Transverse colon (tissue), 4 donors: ENCODE measurements at regions of chr4 and their contacts with region 1.

Region 1: DNA sequence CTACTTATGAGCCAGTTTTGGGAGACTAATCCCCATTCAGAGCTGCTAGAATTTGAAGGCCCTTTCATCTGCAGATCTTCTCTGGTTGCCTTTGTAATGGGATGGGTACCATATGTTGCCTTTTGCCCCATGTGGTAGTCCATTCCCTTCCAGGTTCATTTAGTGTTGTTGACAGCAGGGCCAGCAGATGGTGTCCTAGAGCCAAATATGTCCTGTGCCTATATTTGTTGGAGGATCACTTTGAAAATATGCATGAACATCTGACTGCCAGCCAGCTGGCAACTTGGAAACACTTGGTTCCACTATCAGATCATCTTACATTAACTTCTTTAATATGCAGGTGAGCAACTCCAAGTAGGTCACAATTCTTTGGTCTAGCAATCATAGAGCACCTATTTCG is 30.4 kb downstream of the CFAP299 start:
- DNase-seq: peak; percentile 60
- H3K4me3 ChIP-seq: no peak overlapping the region
- H3K27ac ChIP-seq: no peak overlapping the region
- H3K4me1 ChIP-seq: peaks cover 0 to 4% (median 1%) of the 10 kb centered on the region in 4 donors
- H3K27me3 ChIP-seq: no peaks in the 10 kb centered on the region
- CTCF ChIP-seq: peak; percentile 49 to 72 (median 56)
- EP300 ChIP-seq: no peak
- POLR2A ChIP-seq: no peak

Region 2: GRCh38 chr4:79317711-79318110 is 1048.2 kb before region 1 on chr4:
- in situ Hi-C with region 1: no loop called
- intact Hi-C with region 1: no loop called
- DNase-seq: no peak
- H3K4me3 ChIP-seq: no peak overlapping the region
- H3K27ac ChIP-seq: no peak overlapping the region
- H3K4me1 ChIP-seq: no peaks in the 10 kb centered on the region
- H3K27me3 ChIP-seq: no peaks in the 10 kb centered on the region
- CTCF ChIP-seq: no peak
- EP300 ChIP-seq: no peak
- POLR2A ChIP-seq: no peak

Region 3: DNA sequence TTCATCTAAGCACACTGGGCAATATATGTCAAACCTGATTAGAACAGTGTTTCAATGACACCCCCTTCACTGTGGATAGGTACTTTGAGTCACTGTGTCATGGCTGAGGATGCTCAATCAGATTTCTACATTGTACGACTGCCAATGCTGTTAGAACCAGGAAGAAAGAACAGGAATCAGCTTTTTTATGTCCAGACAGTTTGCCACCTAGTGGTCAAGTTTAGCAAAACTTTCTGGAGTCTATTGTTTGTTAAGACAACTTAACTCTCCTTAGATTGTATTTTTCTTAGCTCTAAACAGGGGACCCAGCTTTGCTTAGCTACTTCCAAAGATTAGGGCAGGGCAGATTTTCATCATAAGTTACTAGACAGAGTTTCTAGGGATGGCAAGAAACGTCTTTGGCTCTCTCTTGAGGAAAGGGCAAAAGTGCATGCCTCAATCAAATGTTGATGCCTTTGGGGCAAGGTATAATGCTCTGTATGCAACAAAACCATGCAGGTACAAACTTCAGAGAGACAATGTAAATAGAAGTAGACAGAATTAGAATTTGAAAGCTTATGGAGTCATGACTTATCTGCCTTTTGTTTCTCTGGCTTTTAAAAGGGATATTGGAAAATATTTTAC is 624.1 kb after region 1 on chr4:
- in situ Hi-C with region 1: loop called in 2 of 4 experiments (anchors 5 to 10 kb)
- intact Hi-C with region 1: loop called (anchors 10 kb)
- DNase-seq: no peak
- H3K4me3 ChIP-seq: no peak overlapping the region
- H3K27ac ChIP-seq: no peak overlapping the region
- H3K4me1 ChIP-seq: no peaks in the 10 kb centered on the region
- H3K27me3 ChIP-seq: no peaks in the 10 kb centered on the region
- CTCF ChIP-seq: peak; percentile 64 to 74 (median 70)
- EP300 ChIP-seq: no peak
- POLR2A ChIP-seq: no peak

Region 4: DNA sequence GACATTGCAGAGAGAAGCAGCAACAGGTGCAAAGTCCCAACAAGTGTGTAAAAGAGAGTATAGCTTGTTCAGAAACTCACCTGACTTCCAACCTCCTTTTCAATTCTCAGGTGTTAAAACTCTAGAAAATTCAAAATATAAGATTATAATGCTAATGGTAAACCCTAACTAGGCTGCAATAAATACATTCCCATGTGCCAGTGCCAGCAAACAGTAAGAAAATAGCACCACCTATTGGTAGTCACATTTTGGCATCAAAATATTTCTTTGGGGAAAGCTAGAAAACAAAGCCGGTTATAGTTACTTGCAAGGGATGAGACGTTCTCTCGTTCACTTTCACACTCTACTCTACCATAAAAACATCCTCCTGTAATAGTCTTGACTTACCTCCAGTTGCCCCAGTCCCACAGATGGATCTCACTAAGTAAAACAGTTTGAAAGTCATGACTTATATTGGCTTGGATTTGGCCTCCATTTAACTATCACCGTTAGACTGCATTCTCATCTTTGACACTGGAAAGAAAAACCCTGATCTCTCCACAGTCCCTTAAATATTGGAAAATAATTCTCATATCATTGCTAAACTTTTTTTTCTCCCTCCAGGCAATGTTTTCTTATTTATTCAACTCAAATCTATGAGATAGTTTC is 674.2 kb after region 1 on chr4:
- in situ Hi-C with region 1: loop called (anchors 10 to 25 kb)
- intact Hi-C with region 1: no loop called
- DNase-seq: no peak
- H3K4me3 ChIP-seq: no peak overlapping the region
- H3K27ac ChIP-seq: peak overlapping the region in 3 of 4 donors; percentile 9 to 45 (median 37)
- H3K4me1 ChIP-seq: peaks cover 0 to 22% (median 2%) of the 10 kb centered on the region in 4 donors
- H3K27me3 ChIP-seq: no peaks in the 10 kb centered on the region
- CTCF ChIP-seq: peak; percentile 59 to 65 (median 64)
- EP300 ChIP-seq: no peak
- POLR2A ChIP-seq: no peak

Region 5: DNA sequence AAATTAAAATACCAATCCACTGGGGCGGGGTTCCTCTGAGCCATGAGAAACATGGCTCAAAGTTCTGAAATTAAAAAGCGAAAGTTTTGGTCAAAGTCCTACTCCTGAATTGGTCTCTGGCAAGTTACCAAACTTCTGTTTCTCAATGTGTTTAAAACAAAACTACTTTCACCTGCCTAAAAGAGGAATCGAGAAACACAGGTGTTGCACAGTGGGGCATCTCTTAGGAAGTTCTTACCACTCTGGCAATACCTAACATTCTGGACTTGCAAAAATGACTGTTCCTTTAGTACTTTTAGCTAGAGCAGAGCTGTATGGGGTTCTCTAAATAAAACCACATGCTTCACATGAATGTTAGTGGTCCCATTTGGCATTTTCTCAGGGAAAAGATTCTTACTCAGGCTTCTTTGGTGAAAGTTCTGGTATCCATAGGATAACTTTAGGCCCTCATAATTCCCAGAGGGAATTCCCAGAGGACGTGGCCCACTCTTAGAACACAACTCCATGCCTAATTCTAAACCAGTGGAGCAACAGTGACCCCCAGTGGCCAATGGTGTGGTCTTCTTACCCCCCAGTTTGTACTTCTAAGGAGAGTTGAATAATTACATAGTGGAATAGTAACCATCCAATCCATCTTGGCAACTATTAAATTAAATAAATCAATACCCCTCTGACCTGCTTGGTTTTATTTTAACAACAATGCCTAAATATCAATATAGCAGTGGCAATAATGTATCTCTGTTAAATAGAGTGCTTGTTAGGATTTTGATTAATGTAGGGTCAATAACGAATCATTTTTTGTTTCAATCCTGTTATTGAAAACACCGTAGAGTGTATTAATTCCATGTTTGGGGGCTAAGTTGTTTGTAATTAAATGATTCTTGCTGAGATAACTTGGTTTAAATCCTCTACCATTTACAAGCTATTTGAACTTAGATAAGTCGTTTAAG is 686.5 kb after region 1 on chr4:
- in situ Hi-C with region 1: loop called (anchors 10 to 25 kb)
- intact Hi-C with region 1: loop called (anchors 5 kb)
- DNase-seq: peak; percentile 79
- H3K4me3 ChIP-seq: no peak overlapping the region
- H3K27ac ChIP-seq: peak overlapping the region in 3 of 4 donors; percentile 46 to 57 (median 49)
- H3K4me1 ChIP-seq: peaks cover 4 to 28% (median 8%) of the 10 kb centered on the region in 4 donors
- H3K27me3 ChIP-seq: no peaks in the 10 kb centered on the region
- CTCF ChIP-seq: peak; percentile 69 to 77 (median 75)
- EP300 ChIP-seq: no peak
- POLR2A ChIP-seq: no peak

Region 6: GRCh38 chr4:81335122-81335912 is 969.4 kb after region 1 on chr4:
- in situ Hi-C with region 1: loop called in 1 of 4 experiments (anchors 25 kb)
- intact Hi-C with region 1: no loop called
- DNase-seq: no peak
- H3K4me3 ChIP-seq: no peak overlapping the region
- H3K27ac ChIP-seq: no peak overlapping the region
- H3K4me1 ChIP-seq: no peaks in the 10 kb centered on the region
- H3K27me3 ChIP-seq: no peaks in the 10 kb centered on the region
- CTCF ChIP-seq: no peak
- EP300 ChIP-seq: no peak
- POLR2A ChIP-seq: no peak

Region 7: DNA sequence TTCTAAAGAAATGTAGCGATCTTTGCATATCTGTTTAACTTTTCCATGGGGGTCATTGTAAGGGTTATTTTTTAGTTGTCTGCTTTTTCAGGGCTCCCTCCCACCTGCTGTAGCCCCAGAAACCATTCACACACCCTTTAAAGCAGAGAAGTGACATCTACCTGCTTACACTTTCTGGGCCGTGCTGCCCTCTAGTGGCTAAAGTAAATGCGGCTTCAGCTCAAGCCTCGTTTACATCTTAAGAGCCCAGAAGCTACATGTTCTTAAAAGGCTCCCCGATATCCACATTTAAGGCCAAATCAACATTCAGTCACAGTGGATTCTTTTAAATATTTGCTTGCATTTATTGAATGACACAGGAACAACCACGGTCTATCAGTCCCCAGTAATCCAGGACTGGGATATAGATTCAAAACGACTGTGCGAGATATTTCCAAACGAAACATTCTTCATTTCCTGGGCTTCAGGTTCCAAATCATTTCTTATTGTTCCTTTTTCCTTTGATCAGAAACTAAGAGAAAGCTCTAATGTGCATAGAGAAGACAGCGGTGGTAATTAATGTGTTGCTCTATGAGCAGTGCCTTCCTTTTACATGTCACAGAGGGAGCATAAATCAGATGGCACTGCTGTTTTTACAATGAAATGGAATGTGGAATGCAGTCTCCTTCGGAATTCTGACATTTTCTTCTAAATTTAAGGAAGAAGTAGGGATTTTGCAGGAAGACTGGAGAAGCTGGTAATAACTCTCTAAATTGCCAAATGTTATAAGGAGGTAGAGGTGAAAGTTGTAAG is 985.9 kb after region 1 on chr4:
- in situ Hi-C with region 1: loop called (anchors 25 kb)
- intact Hi-C with region 1: no loop called
- DNase-seq: peak; percentile 81
- H3K4me3 ChIP-seq: no peak overlapping the region
- H3K27ac ChIP-seq: no peak overlapping the region
- H3K4me1 ChIP-seq: peaks cover 0 to 6% (median 0%) of the 10 kb centered on the region in 4 donors
- H3K27me3 ChIP-seq: no peaks in the 10 kb centered on the region
- CTCF ChIP-seq: peak; percentile 76 to 94 (median 82)
- EP300 ChIP-seq: no peak
- POLR2A ChIP-seq: no peak